Posterior cingulate gyrus (tissue), 11 donors: ENCODE measurements at regions of chr20 and their contacts with region 1.

Region 1: DNA sequence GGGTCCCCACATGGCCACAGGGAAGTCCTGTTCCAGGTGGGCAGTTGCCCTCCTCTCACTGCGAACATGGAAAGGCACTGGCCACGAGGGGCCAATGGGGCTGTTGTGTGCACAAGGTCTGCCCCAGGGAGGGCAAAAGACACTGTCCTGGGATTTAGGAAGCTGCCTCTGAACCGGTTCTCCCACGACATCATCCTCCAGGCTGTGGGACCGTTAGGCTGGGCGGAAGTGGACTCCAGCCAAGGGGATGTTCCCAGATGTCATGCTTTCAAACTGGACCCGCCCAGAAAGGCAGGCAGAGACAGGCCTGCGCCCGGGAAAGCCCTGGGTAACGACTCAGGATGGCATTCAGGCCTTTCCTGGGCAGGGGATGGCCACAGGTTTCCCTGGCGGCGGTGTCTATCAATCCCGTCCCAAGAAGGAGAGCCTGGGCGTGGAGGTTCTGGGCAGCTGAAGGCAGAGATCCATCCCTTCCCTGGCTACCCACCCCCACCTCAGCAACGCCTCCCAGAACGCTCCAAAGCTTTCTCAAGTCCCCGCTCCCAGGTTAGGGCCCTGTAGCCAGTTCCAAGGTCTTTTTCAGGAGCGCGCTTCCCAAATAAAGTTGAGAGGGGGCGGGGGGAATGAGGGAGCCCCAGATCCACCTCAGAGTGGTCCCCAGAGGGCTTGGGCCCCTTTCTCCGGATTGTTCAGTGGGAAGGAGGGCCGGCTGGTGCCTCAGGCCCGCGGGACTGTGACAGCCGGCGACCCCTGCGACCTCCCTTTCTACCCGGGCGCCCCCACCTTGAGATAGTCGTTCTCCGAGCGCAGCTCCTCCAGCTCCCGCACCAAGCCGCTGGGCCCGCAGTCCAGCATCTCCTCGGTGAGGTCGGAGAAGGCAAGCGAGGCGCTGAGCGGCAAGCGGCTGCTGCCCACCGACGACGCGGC is 13.8 kb upstream of the TLDC2 start:
- DNase-seq: peak; percentile 72 to 97 (median 84)

Region 2: GRCh38 chr20:36605399-36606157 is 256.6 kb before region 1 on chr20 and contains the start of gene RAB5IF:
- intact Hi-C with region 1: loop called (anchors 5 kb)
- DNase-seq: peak; percentile 95 to 99 (median 97)

Region 3: DNA sequence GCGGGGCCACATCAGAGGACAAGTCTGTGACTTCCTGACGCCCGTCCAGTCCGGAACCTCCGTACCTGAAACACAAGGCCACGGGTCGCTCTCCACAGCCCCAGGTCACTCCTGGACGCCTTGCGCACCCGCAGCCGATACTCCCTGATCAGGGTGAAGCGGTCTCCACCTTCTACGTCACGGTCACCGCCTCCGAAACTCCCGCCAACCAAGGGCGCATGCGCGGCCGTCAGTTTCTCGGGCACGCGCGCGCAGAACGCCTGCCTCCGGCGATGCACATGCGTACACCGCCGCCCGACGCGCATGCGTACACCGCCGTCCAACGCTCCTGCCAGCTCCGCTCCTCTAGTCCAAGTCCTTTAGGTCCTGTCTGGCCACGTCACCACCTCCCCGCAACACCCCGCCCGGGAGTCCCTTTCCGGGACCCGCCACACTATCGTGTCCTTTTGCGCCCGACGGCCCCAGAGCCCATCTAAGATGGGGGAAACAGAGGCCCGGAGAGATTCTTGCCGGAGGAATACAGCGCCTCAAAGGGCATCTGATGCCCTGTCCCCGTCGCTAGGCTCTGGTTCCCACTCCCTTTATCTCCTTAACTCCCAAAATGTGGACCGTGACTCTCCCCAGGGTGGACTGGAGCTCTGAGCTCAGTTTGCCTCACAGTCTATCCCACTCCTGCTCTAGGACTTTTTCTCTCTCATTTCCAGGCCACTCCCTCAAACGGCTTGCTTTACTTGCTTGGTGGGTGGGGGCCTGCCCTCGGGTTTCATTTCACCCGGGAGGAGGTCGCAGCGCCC is 88.3 kb before region 1 on chr20 and contains the start of gene DSN1:
- intact Hi-C with region 1: loop called (anchors 2 kb)
- DNase-seq: peak; percentile 85 to 98 (median 90)

Region 4: DNA sequence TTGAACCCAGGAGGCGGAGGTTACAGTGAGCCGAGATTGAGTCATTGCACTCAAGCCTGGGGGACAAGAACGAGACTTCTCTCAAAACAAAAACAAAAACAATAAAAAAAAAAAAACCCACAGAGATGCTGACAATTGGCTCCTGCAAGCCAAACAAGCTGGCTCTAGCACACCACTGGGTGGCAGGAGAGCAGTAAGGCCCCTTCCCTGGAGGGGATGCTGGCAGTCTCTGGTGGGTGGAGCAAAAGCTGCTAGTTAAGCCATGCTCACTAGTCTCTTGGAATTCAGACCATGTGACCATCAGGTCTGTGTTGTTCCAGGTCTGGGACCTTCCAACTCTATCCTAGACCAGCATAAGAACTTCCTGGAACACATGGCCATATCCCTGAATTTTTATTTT is 69.7 kb before region 1 on chr20:
- intact Hi-C with region 1: loop called (anchors 5 kb)
- DNase-seq: peak in 7 of 10 donors; percentile 28 to 92 (median 53)

Region 5: GRCh38 chr20:36821964-36822437 is 40.1 kb before region 1 on chr20:
- intact Hi-C with region 1: loop called (anchors 5 kb)
- DNase-seq: peak in 6 of 10 donors; percentile 51 to 95 (median 62)

Region 6: GRCh38 chr20:36832791-36833190 is 29.3 kb before region 1 on chr20:
- intact Hi-C with region 1: loop called (anchors 1 kb)
- DNase-seq: peak in 1 of 10 donors; percentile 31

Region 7: DNA sequence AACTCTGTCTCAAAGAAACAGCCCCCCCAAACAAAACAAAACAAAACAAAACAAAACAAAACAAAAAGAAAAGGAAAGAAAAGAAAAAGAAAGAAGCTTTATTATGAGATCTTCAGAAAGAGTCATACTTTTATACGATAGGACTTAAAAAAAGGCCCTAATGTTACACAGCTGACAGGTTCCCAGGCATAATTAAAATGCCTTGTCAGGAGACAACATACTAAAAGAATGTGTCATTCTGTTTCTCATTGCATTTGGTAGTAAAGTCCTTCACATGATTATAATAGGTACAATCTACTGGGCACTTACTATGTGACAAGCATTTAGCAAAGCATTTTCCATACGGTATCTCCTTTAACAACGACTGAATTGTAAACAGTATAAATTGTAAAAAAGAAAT is 280.6 kb after region 1 on chr20:
- intact Hi-C with region 1: no loop called
- DNase-seq: no peak